ENCODE measurements at regions of chr20 and their contacts with region 1.

Region 1: GRCh38 chr20:64255361-64256281 is at the start of gene PCMTD2:
- DNase-seq: peak; percentile 95
- H3K4me3 Mint-ChIP-seq: peak within 1 kb of the TSS; percentile 99
- H3K27ac Mint-ChIP-seq: peak within 1 kb of the TSS; percentile 97
- H3K4me1 Mint-ChIP-seq: peaks cover 32% of the 10 kb centered on the region
- H3K27me3 Mint-ChIP-seq: peaks cover 29% of the 10 kb centered on the region
- CTCF ChIP-seq: no peak
- total RNA-seq, gene PCMTD2: 61.2 and 62.2 TPM in 2 replicates

Region 2: DNA sequence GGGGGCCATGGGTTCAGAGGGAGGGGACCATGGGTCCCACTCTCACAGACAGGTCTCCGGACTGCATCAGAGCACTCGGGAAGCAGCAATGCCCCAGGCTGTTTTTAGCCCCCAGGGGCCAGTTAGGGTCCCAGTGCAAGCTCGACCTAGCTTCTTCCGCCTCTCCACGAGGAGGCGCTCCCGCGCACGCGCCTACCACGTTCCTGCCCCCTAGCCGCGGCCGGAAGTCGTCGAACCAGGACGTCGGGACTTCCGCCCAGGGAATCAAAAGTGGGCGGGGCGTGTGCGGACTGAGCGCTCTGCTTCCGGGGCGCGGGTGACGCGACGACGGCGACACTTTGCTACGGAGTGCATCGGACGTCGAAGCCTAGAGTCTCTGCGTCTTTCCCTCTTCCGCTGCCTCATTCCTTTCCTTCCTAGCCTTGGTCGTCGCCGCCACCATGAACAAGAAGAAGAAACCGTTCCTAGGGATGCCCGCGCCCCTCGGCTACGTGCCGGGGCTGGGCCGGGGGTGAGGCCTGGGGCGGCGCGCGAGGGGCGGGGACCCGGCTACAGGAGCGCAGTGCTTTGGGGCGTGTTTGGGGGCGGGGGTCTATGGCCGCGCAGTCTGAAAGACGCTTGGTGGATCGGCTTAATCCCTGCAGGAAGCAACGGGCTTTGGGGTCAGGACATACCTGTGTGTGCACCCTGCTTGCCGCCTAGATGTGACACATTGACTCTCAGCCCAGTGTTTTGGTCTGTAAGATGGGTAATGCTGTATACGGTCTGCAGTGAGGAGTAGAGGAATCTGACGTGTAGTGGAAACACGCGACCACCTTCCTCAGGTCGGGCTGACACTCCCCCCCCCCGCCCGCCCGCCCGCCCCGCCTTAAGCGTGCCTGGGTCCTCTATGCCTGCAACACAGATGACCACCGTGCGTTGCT is 274.6 kb before region 1 on chr20 and contains the start of gene PRPF6:
- CTCF ChIA-PET with region 1: no interaction called
- intact Hi-C with region 1: no loop called
- DNase-seq: peak; percentile 99
- H3K4me3 Mint-ChIP-seq: peak within 1 kb of the TSS; percentile 81
- H3K27ac Mint-ChIP-seq: peak within 1 kb of the TSS; percentile 87
- H3K4me1 Mint-ChIP-seq: peaks cover 49% of the 10 kb centered on the region
- H3K27me3 Mint-ChIP-seq: no peaks in the 10 kb centered on the region
- CTCF ChIP-seq: peak; percentile 95
- total RNA-seq, gene PRPF6: 111 and 113 TPM in 2 replicates

Region 3: DNA sequence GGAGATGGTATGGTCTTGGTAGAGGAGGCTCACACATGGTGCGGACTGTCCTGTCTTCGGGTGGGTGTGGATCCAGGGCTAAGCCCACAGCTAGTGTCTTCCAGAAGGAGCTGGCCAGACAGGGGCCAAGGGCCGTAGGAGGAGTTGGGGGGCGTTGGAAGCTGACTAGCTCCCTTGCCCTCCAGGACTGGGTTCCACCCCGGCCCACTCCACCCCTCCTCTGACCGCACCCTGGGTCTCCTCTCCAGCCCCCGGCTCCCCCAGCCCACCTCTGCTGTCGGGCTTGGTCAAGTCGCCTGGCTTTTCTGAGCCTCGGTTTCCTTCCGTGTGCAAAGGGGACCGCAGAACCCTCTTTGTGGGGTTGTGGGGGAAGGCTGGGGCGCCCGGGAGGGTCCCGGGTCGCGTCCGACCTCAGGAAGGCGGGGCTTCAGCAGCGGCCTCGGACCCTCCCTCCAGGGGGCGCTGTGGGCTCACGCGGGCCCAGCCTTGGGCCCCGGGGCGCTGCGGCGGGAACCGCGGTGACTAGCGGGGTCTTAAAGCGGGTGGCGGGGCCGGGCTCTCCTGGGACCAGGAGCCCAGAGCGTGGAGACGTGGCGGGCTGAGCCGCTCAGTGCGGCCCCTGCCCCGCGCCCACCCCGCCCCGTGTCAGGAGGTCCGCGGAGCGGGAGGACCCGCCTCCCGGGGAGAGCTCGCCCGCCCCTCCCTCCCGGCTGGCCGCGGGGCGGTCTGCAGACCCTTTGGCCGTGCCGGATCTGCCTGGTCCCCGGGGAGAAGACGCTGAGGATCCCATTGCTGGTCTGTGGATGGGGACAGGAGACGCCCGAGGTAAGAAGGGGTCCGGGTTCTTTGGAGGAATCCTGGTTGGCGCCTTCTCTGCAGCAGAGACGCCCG is 153.6 kb before region 1 on chr20:
- CTCF ChIA-PET with region 1: no interaction called
- intact Hi-C with region 1: no loop called
- DNase-seq: peak; percentile 80
- H3K4me3 Mint-ChIP-seq: peak overlapping the region; percentile 15
- H3K27ac Mint-ChIP-seq: no peak overlapping the region
- H3K4me1 Mint-ChIP-seq: no peaks in the 10 kb centered on the region
- H3K27me3 Mint-ChIP-seq: peaks cover 99% of the 10 kb centered on the region
- CTCF ChIP-seq: peak; percentile 95

Region 4: DNA sequence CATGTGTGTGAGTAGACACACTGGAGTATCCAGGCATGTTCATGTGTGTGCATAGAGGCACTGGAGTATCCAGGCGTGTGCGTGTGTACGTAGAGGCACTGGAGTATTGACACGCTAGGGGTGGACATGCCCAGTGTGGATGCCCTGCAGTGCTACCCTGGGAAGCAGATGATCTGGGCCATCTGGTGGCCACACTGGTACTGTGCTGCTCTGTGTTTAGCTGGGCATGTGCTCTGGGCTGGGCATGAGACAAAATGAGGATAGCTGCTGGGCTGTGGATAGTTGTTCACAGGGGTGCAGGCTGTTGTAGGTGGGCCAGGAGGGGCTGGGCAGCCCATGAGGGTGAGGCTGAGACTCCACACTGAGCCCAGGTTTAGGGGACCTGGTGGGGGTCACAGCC is 124.2 kb before region 1 on chr20:
- CTCF ChIA-PET with region 1: no interaction called
- intact Hi-C with region 1: loop called (anchors 5 kb)
- DNase-seq: peak; percentile 67
- H3K4me3 Mint-ChIP-seq: no peak overlapping the region
- H3K27ac Mint-ChIP-seq: no peak overlapping the region
- H3K4me1 Mint-ChIP-seq: peaks cover 9% of the 10 kb centered on the region
- H3K27me3 Mint-ChIP-seq: peaks cover 61% of the 10 kb centered on the region
- CTCF ChIP-seq: peak; percentile 54

Region 5: GRCh38 chr20:64188682-64189529 is 66.7 kb before region 1 on chr20:
- CTCF ChIA-PET with region 1: no interaction called
- intact Hi-C with region 1: loop called (anchors 2 kb)
- DNase-seq: peak; percentile 95
- H3K4me3 Mint-ChIP-seq: peak overlapping the region; percentile 22
- H3K27ac Mint-ChIP-seq: peak overlapping the region; percentile 81
- H3K4me1 Mint-ChIP-seq: peaks cover 22% of the 10 kb centered on the region
- H3K27me3 Mint-ChIP-seq: peaks cover 9% of the 10 kb centered on the region
- CTCF ChIP-seq: no peak